Right ventricle myocardium superior (tissue), 1 donor: ENCODE measurements at regions of chr3 and their contacts with region 1.

Region 1: DNA sequence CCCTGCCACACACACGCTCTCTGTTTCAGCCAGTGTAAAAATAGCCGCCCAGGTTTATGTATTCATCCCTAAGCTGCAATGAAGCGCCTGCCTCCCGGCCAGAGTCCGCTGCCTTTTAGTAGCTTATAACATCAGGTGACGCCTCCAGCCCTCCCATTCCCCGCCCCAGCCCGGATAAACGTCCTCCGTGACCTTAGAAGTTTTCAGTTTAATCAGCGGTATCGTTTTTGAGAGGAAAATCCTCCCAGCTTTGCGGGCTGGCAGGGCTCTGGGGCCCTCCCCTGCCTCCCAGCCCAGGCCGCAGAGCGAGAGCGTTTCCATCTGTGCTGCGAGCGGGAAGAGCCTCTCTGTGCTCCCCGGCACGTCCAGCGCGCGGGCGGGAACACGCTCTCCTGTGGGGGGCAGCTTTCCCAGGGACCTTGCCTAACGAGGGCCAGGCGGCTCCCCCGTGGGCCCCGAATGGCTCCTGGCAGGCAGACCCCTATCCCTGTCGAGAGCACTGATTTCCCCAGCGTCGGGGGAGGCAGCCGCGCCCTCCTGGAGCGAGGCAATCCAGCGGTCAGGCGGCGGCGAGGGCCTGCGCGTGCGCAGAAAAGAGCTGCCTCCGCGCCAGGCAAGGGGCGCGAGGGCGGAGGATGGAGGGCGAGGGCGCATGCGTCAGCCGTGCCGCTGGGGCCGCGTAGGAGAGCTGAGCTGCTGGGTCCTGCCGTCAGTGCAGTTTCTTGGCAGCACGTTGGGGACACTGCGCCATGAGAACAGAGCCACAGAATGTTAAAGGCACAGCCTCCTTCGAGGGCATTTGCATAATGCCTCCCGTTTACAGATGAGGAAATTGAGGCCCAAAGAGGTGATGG is 71.1 kb downstream of the CCNL1 start:
- DNase-seq: peak; percentile 97
- ATAC-seq: peak; percentile 82

Region 2: DNA sequence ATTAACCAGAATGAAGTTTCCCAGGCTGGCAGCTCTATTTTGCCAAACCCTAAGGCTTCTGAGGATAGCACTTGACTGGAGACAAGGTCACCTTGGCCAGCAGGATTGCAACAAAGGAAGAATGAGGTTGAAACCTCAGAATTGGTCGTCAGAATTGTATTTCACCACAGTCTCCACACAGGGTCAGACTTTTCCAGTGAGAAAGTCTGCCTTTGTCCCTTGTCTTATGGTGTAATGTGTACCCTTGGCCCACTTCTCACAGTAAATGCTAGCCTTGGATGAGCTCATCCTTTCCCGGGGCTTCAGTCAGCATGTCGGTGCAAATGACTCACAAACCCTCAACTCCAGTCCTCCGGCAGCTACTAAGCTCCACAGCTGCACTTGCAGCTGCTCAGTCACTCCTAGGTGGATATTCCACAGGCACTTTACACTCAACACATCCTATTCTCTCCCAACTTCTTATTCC is 553.6 kb before region 1 on chr3:
- intact Hi-C with region 1: loop called (anchors 5 kb)
- DNase-seq: peak; percentile 61
- ATAC-seq: peak; percentile 86

Region 3: DNA sequence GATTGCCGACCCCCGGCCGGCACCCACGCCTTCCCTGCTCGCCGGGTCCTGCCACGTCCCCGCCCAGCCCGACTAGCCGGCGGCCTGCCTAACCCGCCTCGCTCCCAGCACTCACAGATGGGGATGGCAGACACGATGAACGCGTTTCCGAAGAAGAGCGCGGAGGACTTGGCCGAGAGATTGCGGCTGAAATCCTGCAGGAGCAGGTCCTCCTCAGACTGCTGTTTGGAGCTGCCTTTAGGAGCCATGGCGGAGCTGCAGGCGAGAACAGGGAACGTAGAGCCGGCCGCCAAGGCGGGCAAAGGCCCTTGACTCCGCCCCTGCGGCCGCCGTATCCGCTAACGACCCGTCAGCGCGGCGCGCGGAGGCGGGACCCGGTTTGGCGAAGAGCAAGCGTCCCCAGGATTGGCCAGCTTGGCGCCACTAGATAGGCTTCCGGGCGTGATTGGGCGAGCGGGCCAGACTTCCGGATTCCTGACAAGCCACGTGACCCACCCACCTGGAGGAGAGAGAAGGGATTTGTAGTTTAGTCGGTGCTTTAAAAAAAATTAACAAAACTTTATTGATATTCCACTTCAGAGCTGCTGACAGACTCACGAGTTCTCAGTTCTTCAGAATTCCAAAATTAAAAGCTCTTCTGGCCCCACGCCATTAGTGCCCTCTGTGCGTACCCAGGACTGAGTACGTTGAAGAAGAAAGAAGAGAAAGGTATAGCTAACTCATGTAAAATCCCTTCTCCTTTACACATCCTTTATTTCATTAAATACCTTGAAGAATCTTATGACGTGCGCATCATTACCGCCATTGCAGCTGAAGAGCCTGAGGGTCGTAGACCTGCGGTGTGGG is 533.8 kb before region 1 on chr3 and contains the start of gene SSR3:
- intact Hi-C with region 1: loop called (anchors 5 kb)
- DNase-seq: peak; percentile 100
- ATAC-seq: peak; percentile 99
- total RNA-seq, gene SSR3: 192 TPM

Region 4: DNA sequence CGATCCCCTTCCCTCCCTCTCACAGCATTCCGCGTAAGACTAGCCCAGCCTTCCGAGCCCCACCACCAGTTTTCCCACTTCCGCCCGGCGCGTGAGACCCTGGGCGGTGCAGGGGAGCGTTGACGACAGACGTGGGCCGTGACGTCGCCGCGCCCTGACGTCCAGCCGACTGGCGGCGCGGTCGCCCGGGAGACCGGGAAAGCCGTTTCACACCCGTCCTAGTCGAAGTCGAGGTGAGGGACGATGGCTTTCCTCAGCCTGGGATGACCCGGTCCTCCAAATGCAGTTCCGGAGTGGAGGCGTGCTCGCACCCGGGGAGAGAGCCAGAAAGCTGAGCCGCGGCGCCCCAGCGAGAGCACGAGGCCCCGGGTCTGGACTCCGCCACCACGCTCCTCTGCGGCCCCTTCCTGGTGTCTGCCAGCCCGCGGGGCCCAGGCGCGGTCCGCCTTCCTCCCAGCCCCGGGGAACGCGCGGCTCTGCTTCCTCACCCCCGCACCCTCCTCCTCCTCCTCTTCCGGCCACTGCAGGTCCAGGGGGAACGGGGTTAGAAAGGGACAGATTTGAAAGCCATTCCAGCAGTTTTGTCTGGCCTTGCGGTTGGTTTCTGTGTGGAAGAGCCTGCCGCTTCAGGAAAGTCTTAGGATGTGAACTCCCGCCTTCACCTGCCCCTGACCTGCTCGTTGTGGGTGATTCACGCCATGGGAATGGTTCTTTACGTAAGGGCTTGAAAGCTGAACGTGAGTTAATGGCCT is 262.5 kb before region 1 on chr3 and contains the start of gene LEKR1:
- intact Hi-C with region 1: loop called (anchors 5 kb)
- DNase-seq: peak; percentile 94
- ATAC-seq: peak; percentile 99
- total RNA-seq, gene LEKR1: 0.56 TPM

Region 5: GRCh38 chr3:157136647-157137387 is 48.0 kb after region 1 on chr3:
- intact Hi-C with region 1: loop called (anchors 2 kb)
- DNase-seq: no peak
- ATAC-seq: peak; percentile 40